ENCODE measurements at regions of chr9 and their contacts with region 1.

Region 1: DNA sequence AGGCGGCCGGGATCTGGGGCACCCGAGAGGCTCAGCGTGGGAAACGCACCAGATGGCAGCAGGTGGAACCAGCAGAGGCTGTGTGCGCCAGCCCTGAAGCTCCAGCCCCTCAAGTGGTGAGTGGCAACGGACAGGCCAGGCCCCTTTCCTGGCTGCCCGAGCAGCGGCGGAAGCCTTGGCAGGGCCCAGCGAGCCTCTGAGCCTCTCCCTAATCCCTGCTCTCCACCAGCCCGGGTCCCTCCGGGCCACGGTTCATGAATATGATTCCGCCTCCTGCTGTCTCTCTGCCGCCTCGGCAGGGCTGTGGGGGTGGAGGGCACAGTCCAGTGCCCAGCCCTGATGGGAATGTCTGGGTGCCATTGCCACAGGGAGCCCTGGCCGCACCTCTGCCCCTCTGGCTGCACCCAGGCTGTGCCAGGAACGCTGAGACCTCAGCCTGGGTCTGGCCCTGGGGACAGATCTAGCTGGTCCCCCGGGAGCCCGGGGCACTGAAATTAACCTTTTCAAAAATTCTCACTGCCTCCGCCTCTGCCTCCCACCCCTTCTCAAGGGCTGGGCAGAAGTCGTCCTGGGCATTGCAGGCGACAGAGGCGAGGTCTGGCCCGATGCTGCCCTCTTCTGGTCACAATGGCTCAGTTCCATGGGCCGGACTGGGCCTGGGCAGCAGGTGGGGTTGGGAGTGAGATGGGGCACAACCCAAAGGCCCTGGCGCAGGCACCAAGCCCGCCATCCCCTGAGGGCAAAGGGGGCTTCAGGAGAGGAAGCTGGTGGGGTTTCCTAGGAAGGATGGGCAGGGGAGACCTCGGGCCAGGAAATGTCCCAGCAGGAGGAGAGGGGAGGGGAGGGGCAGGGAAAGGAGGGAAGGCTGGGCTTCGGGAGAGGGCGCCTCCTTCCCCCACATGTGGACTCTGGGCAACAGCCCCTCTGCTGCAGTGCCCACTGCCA is 20.3 kb downstream of the CCDC187 start:
- DNase-seq: peak; percentile 78 to 88
- ATAC-seq: peak; percentile 89 to 98
- H3K4me3 ChIP-seq: no peak overlapping the region
- H3K27ac ChIP-seq: no peak overlapping the region
- H3K4me1 ChIP-seq: 0 out of 3 replicates have a peak, but pooled peaks cover 2% of the 10 kb centered on the region
- CTCF ChIP-seq: peak; percentile 80
- EP300 ChIP-seq: no peak
- POLR2A ChIP-seq: no peak
- RAD21 ChIP-seq: peak; percentile 85 to 90

Region 2: DNA sequence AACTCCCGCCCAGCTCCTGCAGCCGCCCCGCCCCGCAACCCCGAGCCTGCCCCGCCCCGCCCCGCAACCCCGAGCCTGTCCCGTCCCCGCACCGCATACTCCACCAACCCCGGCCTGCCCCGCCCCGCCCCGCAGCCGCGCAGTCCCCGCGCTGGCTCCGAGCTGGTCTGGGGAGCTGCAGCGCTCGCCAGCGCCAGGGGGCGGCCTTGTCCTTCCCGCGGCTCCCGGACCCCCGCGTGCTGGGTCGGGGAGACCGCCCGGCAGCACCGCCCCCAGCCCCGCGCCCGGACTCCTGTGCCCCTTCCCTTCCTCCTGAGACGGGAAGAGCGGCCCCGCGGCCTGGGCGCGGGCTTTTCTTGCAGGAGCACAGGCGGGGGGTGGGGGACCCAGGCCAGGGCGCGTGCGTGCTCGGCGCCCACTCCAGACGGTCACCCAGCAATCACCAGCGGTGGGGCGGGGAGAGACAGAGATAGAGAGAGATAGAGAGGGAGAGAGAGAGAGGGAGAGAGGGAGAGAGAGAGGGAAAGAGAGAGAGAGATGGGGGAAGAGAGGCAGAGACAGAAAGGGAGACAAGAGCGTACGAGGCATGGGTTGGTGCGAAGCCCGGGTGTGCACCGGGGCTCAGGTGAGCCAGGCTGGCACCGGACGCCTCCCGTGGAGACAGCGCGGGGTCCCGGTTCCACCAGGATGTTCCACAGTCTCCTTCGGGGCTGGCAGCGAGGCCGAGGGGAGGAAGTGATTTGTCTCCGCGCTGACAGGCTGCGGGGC is 150.2 kb before region 1 on chr9:
- CTCF ChIA-PET with region 1: interaction called, 20 read pairs
- POLR2A ChIA-PET with region 1: no interaction called
- DNase-seq: peak in 1 of 2 experiments; percentile 73
- ATAC-seq: peak; percentile 41 to 80; a peak in 5 of 6 replicates
- H3K4me3 ChIP-seq: peak overlapping the region; percentile 58
- H3K27ac ChIP-seq: peak overlapping the region; percentile 68 to 91
- H3K4me1 ChIP-seq: peaks cover 8% of the 10 kb centered on the region; the same call in 2 of the 3 replicates
- CTCF ChIP-seq: peak; percentile 53
- EP300 ChIP-seq: no peak
- POLR2A ChIP-seq: no peak
- RAD21 ChIP-seq: peak; percentile 27 to 63; a peak in 4 of 5 replicates

Region 3: GRCh38 chr9:136170006-136170901 is 113.3 kb before region 1 on chr9:
- CTCF ChIA-PET with region 1: interaction called, 64 read pairs
- POLR2A ChIA-PET with region 1: no interaction called
- DNase-seq: peak; percentile 36 to 61
- ATAC-seq: peak; percentile 67 to 92; a peak in 5 of 6 replicates
- H3K4me3 ChIP-seq: no peak overlapping the region
- H3K27ac ChIP-seq: peak overlapping the region in 1 of 2 experiments; percentile 33; a peak in 1 of 6 replicates
- H3K4me1 ChIP-seq: peaks cover 7% of the 10 kb centered on the region; the same call in 1 of the 3 replicates
- CTCF ChIP-seq: peak; percentile 72
- EP300 ChIP-seq: no peak
- POLR2A ChIP-seq: no peak
- RAD21 ChIP-seq: peak; percentile 69 to 75

Region 4: DNA sequence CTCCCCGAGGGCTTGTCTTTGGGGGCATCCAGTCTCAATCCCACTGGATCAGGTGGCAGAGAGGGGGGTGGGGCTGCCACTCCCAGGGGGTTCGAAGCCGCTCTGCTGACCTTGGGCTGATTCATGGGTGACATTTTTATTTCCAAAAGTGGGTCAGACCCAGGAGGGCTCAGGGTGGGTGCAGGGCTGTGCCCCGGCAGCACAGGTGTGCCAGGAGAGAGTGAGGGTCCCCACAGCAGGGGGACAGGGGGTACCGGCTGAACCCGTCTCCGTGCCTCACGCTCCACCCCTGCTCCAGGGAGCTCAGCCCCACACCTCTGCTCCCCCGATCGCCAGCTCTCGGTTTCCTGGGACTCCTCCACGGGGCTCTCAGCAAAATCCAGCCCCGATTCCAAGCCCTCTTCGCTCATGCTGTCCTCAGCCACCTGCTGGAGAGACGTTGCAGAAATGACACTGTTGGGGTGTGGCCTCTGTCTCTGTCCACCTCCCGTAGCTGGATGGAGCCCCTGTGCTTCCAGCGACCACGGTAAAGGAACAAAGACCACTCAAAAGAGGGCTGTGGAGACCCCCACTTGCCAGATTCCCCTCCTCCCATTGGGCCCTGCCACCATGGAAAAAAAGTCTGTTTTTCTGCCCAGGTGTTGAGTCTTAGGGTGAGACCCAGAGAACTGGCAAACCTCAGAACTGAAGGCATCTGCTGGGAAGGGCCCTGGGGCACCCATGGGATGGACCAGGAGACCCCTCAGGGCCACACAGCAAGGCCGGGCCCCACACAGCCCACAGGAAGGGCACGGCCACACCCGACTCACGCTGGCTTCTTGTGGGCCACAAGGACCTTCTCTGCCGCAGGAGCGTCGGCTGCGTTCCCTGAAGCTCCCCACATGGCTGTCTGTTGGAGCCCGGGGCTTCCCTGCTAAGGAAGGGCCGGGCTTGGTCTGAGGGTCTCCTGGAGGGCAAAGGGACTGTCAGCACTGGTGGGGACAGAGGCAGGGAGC is 27.4 kb before region 1 on chr9:
- CTCF ChIA-PET with region 1: interaction called, 23 read pairs
- POLR2A ChIA-PET with region 1: no interaction called
- DNase-seq: peak; percentile 33 to 80
- ATAC-seq: peak; percentile 65 to 77; a peak in 5 of 6 replicates
- H3K4me3 ChIP-seq: no peak overlapping the region
- H3K27ac ChIP-seq: no peak overlapping the region
- H3K4me1 ChIP-seq: peaks cover 4% of the 10 kb centered on the region; the same call in 1 of the 3 replicates
- CTCF ChIP-seq: no peak
- EP300 ChIP-seq: no peak
- POLR2A ChIP-seq: no peak
- RAD21 ChIP-seq: no peak

Region 5: DNA sequence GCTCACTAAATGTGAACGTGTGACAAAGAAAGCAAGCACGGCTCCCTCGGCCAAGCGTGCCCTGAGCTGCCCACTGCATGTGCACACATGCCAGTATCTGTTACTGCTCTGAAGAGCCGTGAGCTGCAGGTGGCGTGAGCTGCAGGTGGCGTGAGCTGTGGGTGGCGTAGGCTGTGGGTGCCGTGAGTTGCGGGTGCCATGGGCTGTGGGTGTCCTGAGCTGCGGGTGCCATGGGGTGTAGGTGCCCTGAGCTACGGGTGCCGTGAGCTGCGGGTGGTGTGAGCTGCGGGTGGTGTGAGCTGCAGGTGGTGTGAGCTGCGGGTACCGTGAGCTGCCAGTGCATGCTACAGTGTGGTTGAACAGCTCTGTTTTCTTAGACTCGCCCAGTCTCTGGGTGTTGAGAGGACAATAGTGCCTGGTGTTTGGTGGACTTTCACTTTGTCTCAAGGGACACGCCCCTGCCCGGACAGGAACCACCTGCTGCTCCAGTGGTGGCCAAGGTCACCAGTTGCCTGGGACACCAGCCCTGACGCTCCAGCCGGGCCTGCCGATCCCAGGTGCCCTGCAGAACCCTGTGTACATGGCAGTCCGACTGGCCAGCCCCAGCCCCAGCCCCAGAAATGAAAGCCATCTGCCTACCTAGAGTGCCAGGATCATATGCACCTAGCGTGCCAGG is 13.6 kb after region 1 on chr9:
- CTCF ChIA-PET with region 1: interaction called, 23 read pairs
- POLR2A ChIA-PET with region 1: no interaction called
- DNase-seq: no peak
- ATAC-seq: peak; percentile 21 to 34; a peak in 2 of 6 replicates
- H3K4me3 ChIP-seq: no peak overlapping the region
- H3K27ac ChIP-seq: no peak overlapping the region
- H3K4me1 ChIP-seq: no peaks in the 10 kb centered on the region
- CTCF ChIP-seq: no peak
- EP300 ChIP-seq: no peak
- POLR2A ChIP-seq: no peak
- RAD21 ChIP-seq: no peak

Region 6: DNA sequence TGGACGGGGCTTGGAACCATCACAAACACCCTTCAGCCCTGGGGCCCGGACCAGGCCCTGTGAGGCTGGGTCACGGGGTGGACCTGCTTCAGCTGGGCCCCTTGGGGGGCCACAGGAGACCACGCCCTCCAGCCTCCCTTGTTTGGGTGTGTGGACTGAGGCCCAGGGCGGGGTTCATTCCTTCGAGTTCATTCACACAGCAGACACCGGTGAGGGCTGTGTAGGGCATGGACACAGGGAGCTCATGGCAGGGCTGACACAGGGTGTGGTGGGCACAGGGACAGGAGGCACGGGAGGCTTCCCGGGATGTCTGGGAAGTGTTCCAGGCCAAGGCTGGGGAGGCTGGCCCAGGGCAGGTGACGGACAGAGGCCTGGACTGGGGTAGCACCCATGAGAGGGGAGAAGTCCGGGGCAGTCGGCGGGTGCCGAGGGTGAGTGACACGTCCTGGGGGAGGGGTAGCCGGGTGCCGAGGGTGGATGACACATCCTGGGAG is 71.1 kb after region 1 on chr9:
- CTCF ChIA-PET with region 1: no interaction called
- POLR2A ChIA-PET with region 1: no interaction called
- DNase-seq: peak; percentile 23 to 52
- ATAC-seq: peak; percentile 12 to 51; a peak in 5 of 6 replicates
- H3K4me3 ChIP-seq: no peak overlapping the region
- H3K27ac ChIP-seq: peak overlapping the region in 1 of 2 experiments; percentile 66; a peak in 3 of 6 replicates
- H3K4me1 ChIP-seq: peaks cover 27% of the 10 kb centered on the region
- CTCF ChIP-seq: no peak
- EP300 ChIP-seq: no peak
- POLR2A ChIP-seq: no peak
- RAD21 ChIP-seq: no peak

Measured in A549 (cell line).